Transverse colon (tissue), 4 donors: ENCODE measurements at regions of chr21 and their contacts with region 1.

Region 1: DNA sequence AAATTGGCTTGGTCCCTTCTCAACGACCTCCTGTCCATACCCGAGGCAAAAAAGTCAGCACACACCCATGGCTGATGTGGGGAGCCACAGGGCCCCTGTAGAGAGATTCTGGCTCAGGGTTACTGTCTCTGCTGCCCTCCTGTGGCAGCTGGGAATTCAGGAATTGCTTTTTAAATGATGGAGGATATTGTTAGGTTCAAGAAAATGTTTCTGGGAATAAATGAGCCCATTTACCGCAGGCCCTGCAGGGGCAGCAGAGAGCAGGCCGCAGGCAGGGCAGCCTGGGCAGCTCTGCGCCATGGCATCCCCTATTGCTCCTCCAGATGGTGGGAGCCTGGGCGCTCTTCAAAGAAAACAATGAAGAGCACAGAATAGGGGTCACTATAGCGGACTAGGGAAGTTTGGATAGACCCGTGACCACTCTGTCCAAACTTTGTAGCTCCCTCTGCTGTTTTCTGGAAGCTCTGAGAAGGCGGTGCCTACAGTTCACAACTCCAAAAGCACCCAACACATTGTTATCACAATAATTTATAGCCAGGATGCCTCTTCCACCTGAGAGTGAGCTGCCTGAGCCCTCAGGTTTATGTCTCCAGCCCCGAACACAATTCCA is 201.1 kb downstream of the BACH1 start:
- DNase-seq: no peak
- H3K4me3 ChIP-seq: no peak overlapping the region
- H3K27ac ChIP-seq: no peak overlapping the region
- H3K4me1 ChIP-seq: no peaks in the 10 kb centered on the region
- H3K27me3 ChIP-seq: no peaks in the 10 kb centered on the region
- CTCF ChIP-seq: peak in 1 of 5 experiments; percentile 17
- EP300 ChIP-seq: no peak
- POLR2A ChIP-seq: no peak

Region 2: DNA sequence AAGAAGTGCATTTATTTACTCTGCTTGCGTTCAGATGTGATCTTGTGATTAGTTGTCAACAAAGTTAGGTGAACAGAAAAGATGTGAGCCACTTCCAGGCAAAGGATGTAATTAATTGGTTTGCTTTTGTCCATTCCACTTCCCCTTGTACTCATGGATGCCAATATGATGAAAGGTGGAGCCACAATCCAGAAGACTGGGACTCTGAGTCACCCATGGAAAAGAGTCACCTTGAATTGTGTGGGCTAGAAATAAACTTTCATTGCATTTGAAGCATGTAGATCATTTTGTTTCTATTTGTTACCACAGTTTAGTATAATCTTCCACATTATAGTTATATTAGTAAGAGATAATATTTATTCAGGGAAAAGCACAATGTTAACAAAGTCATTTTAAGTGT is 1191.3 kb before region 1 on chr21:
- in situ Hi-C with region 1: no loop called
- intact Hi-C with region 1: no loop called
- DNase-seq: no peak
- H3K4me3 ChIP-seq: no peak overlapping the region
- H3K27ac ChIP-seq: no peak overlapping the region
- H3K4me1 ChIP-seq: no peaks in the 10 kb centered on the region
- H3K27me3 ChIP-seq: no peaks in the 10 kb centered on the region
- CTCF ChIP-seq: no peak
- EP300 ChIP-seq: no peak
- POLR2A ChIP-seq: no peak

Region 3: GRCh38 chr21:29568020-29568697 is 68.3 kb after region 1 on chr21:
- in situ Hi-C with region 1: no loop called
- intact Hi-C with region 1: no loop called
- DNase-seq: no peak
- H3K4me3 ChIP-seq: no peak overlapping the region
- H3K27ac ChIP-seq: no peak overlapping the region
- H3K4me1 ChIP-seq: no peaks in the 10 kb centered on the region
- H3K27me3 ChIP-seq: no peaks in the 10 kb centered on the region
- CTCF ChIP-seq: no peak
- EP300 ChIP-seq: no peak
- POLR2A ChIP-seq: no peak

Region 4: GRCh38 chr21:30552782-30553181 is 1052.9 kb after region 1 on chr21:
- in situ Hi-C with region 1: no loop called
- intact Hi-C with region 1: no loop called
- DNase-seq: no peak
- H3K4me3 ChIP-seq: no peak overlapping the region
- H3K27ac ChIP-seq: no peak overlapping the region
- H3K4me1 ChIP-seq: no peaks in the 10 kb centered on the region
- H3K27me3 ChIP-seq: no peaks in the 10 kb centered on the region
- CTCF ChIP-seq: no peak
- EP300 ChIP-seq: no peak
- POLR2A ChIP-seq: no peak

Region 5: GRCh38 chr21:30676737-30677136 is 1176.9 kb after region 1 on chr21:
- in situ Hi-C with region 1: no loop called
- intact Hi-C with region 1: loop called (anchors 5 kb)
- DNase-seq: no peak
- H3K4me3 ChIP-seq: no peak overlapping the region
- H3K27ac ChIP-seq: no peak overlapping the region
- H3K4me1 ChIP-seq: no peaks in the 10 kb centered on the region
- H3K27me3 ChIP-seq: no peaks in the 10 kb centered on the region
- CTCF ChIP-seq: no peak
- EP300 ChIP-seq: no peak
- POLR2A ChIP-seq: no peak